Gastrocnemius medialis (tissue), 4 donors: ENCODE measurements at regions of chr5 and their contacts with region 1.

Region 1: DNA sequence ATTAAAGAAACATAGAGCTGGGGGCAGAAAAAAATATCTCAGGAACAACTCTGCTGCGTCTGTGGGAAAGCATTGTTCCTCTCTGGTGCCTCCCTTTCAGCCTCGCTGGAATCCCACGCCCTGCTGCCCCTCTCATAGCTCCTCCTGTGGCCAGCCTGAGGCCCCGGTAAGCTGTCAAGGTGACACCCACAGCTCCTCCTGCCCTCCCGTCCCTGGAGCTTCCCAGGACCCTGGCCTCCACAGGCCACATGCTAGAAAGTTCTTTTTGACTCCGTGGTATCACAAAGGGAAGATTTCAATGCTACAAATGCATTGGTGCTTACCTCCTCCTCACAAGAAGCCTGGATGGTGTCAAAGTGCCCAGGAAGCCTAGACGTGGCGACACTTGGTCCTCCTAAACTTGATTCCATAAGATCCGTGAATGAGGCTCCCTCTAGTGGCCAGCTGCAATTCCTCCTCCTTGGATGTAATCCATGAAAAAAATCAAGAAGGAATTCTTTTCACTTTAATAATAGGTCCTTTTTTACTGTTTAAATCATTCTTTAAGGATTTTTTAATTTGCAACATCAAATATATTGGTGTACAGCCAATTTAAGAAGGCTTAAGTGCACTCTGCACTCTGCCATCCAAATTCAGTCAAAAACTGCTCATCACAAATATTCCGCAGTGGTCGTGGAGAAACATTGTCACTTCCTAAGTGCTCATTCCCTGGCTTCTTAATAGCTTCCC is 104.9 kb downstream of the CFAP90 start:
- DNase-seq: peak; percentile 50 to 69
- ATAC-seq: peak; percentile 88 to 94
- H3K4me3 ChIP-seq: no peak overlapping the region
- H3K27ac ChIP-seq: peak overlapping the region in 2 of 4 donors; percentile 19 to 44
- H3K4me1 ChIP-seq: peaks cover 0 to 3% of the 10 kb centered on the region in 2 donors
- H3K27me3 ChIP-seq: no peaks in the 10 kb centered on the region
- CTCF ChIP-seq: peak; percentile 76 to 84 (median 78)
- POLR2A ChIP-seq: no peak

Region 2: GRCh38 chr5:6765612-6766525 is 980.2 kb before region 1 on chr5:
- in situ Hi-C with region 1: loop called in 1 of 4 experiments (anchors 10 kb)
- intact Hi-C with region 1: loop called (anchors 5 kb)
- DNase-seq: peak; percentile 43 to 65
- ATAC-seq: peak; percentile 47 to 68
- H3K4me3 ChIP-seq: no peak overlapping the region
- H3K27ac ChIP-seq: peak overlapping the region; percentile 58 to 81 (median 80)
- H3K4me1 ChIP-seq: peaks cover 16 to 25% of the 10 kb centered on the region in 2 donors
- H3K27me3 ChIP-seq: no peaks in the 10 kb centered on the region
- CTCF ChIP-seq: peak; percentile 58 to 81 (median 79)
- POLR2A ChIP-seq: no peak

Region 3: GRCh38 chr5:7078901-7079300 is 667.1 kb before region 1 on chr5:
- in situ Hi-C with region 1: no loop called
- intact Hi-C with region 1: loop called (anchors 2 kb)
- DNase-seq: no peak
- ATAC-seq: no peak
- H3K4me3 ChIP-seq: no peak overlapping the region
- H3K27ac ChIP-seq: no peak overlapping the region
- H3K4me1 ChIP-seq: no peaks in the 10 kb centered on the region
- H3K27me3 ChIP-seq: peaks cover 0 to 5% (median 0%) of the 10 kb centered on the region in 3 donors
- CTCF ChIP-seq: no peak
- POLR2A ChIP-seq: no peak

Region 4: GRCh38 chr5:7251132-7251531 is 494.9 kb before region 1 on chr5:
- in situ Hi-C with region 1: loop called in 2 of 4 experiments (anchors 10 to 25 kb)
- intact Hi-C with region 1: no loop called
- DNase-seq: no peak
- ATAC-seq: no peak
- H3K4me3 ChIP-seq: no peak overlapping the region
- H3K27ac ChIP-seq: no peak overlapping the region
- H3K4me1 ChIP-seq: no peaks in the 10 kb centered on the region
- H3K27me3 ChIP-seq: no peaks in the 10 kb centered on the region
- CTCF ChIP-seq: no peak
- POLR2A ChIP-seq: no peak

Region 5: DNA sequence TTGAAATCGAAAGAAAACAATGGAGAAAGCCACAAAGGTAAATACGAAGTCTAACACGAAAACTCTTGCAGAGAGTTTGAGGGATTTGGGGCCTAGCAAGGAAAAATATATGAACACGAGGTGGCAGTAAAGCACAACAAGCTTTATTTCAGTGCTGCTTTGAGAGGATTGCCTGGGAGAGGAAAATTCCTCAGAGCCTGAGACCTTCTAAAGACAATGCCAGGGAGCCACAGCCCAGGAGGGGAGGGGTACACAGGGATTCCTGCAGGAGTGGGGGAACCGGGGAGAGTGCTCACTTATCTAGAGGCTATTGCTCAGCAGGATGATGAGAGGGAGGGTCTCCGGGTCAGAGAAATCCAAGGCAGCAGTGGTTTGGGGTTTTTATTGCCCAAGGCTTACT is 485.0 kb before region 1 on chr5:
- in situ Hi-C with region 1: loop called in 2 of 4 experiments (anchors 10 to 25 kb)
- intact Hi-C with region 1: loop called (anchors 2 kb)
- DNase-seq: no peak
- ATAC-seq: peak in 1 of 2 donors; percentile 81
- H3K4me3 ChIP-seq: no peak overlapping the region
- H3K27ac ChIP-seq: no peak overlapping the region
- H3K4me1 ChIP-seq: no peaks in the 10 kb centered on the region
- H3K27me3 ChIP-seq: no peaks in the 10 kb centered on the region
- CTCF ChIP-seq: peak; percentile 43 to 64 (median 52)
- POLR2A ChIP-seq: no peak

Region 6: DNA sequence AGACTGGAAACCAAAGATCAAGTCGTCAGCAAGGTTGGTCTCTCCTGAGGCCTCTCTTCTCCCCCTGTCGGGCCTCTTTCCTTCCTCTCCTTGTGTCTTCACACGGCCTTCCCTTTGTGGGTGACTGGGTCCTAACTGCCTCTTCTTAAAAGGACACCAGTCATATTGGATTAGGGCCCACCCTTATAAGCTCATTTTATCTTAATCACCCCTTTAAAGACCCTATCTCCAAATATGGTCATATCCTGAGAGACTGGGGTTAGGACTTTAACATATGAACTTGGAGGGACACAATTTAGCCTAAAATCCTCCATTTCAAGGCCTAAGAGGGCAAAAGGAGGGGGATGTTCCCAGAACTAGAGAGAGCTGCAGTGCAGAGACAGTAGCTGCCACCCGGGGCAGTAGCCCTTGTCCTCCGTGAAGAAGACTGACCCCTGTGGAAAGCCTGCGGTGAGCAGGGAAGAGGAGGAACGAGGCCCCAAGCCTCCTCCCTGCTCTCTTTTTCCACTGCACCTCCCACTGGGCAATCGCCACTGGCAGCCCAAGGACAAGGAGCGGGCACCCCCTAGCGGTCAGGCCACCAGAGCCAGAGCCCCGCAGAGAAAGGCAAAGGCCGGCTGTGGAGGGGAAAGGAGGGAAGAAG is 70.0 kb after region 1 on chr5:
- in situ Hi-C with region 1: no loop called
- intact Hi-C with region 1: loop called (anchors 5 kb)
- DNase-seq: peak; percentile 68 to 83
- ATAC-seq: peak; percentile 86 to 96
- H3K4me3 ChIP-seq: no peak overlapping the region
- H3K27ac ChIP-seq: peak overlapping the region; percentile 5 to 62 (median 32)
- H3K4me1 ChIP-seq: peaks cover 4 to 10% of the 10 kb centered on the region in 2 donors
- H3K27me3 ChIP-seq: no peaks in the 10 kb centered on the region
- CTCF ChIP-seq: peak; percentile 75 to 90 (median 84)
- POLR2A ChIP-seq: no peak